Ascending aorta (tissue), 2 donors: ENCODE measurements at regions of chr1 and their contacts with region 1.

Region 1: GRCh38 chr1:21255278-21255942 is 34.9 kb downstream of the ECE1 start:
- DNase-seq: peak; percentile 66 to 96
- H3K4me3 ChIP-seq: no peak overlapping the region
- H3K27ac ChIP-seq: peak overlapping the region; percentile 76 to 80
- H3K4me1 ChIP-seq: peaks cover 19 to 48% of the 10 kb centered on the region in 2 donors
- H3K27me3 ChIP-seq: no peaks in the 10 kb centered on the region
- CTCF ChIP-seq: peak; percentile 81 to 91 (median 81)

Region 2: DNA sequence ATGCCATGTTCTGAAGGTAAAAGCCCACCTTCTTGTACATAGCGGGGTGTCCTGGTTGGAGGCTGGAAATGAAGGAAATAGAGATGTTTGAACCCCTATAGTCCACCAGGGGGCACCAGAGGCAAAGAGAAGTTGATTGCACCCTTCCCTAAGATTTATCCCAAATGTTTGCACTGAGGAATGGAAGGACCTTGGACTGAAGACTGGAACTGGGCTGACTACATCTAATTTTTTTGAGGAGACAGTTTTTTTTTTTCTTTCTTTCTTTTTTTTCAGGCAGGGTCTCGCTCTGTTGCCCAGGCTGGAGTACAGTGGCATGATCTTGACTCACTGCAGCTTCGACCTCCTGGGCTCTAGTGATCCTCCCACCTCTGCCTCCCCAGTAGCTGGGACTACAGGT is 23.4 kb before region 1 on chr1:
- intact Hi-C with region 1: loop called (anchors 2 kb)
- DNase-seq: no peak
- H3K4me3 ChIP-seq: no peak overlapping the region
- H3K27ac ChIP-seq: no peak overlapping the region
- H3K4me1 ChIP-seq: no peaks in the 10 kb centered on the region
- H3K27me3 ChIP-seq: no peaks in the 10 kb centered on the region
- CTCF ChIP-seq: peak; percentile 68 to 81 (median 71)

Region 3: DNA sequence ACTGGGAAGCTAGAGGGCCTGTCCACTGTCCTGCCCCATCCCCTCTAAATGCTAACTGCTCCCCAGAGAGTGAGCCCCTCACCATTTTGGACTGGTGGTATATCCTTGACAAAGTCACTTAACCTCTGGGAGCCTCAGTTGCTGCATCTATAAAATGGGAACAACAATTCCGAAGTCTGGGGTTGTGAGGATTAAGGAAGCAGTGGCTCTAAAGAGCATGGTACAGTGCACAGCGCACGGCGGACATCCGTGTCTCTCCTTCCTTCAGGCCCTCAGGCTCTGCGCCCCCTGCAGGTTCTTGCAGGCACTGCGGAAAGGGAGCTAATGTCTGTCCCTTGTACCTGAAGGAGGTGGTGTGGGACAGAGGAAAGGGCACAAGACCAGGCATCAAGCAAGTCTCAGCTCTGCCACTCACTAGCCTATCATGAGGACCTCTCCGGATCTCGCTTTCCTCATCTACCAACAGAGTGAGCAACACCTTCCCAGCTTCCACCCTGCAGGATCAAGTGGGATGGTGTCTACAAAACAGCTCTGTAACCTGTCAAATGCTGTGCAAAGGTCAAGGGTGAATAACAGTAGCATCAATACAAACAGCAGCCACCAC is 14.8 kb after region 1 on chr1:
- intact Hi-C with region 1: loop called (anchors 2 kb)
- DNase-seq: peak in 1 of 2 donors; percentile 93
- H3K4me3 ChIP-seq: no peak overlapping the region
- H3K27ac ChIP-seq: peak overlapping the region; percentile 72 to 98
- H3K4me1 ChIP-seq: peaks cover 21 to 42% of the 10 kb centered on the region in 2 donors
- H3K27me3 ChIP-seq: no peaks in the 10 kb centered on the region
- CTCF ChIP-seq: peak; percentile 82 to 93 (median 87)

Region 4: GRCh38 chr1:21289700-21290545 is 34.5 kb after region 1 on chr1 and contains the start of gene ECE1:
- intact Hi-C with region 1: loop called (anchors 2 kb)
- DNase-seq: peak in 1 of 2 donors; percentile 77
- H3K4me3 ChIP-seq: peak within 1 kb of the TSS; percentile 80 to 84
- H3K27ac ChIP-seq: peak within 1 kb of the TSS; percentile 79 to 82
- H3K4me1 ChIP-seq: peaks cover 9 to 35% of the 10 kb centered on the region in 2 donors
- H3K27me3 ChIP-seq: no peaks in the 10 kb centered on the region
- CTCF ChIP-seq: no peak
- total RNA-seq, gene ECE1: 336 TPM

Region 5: DNA sequence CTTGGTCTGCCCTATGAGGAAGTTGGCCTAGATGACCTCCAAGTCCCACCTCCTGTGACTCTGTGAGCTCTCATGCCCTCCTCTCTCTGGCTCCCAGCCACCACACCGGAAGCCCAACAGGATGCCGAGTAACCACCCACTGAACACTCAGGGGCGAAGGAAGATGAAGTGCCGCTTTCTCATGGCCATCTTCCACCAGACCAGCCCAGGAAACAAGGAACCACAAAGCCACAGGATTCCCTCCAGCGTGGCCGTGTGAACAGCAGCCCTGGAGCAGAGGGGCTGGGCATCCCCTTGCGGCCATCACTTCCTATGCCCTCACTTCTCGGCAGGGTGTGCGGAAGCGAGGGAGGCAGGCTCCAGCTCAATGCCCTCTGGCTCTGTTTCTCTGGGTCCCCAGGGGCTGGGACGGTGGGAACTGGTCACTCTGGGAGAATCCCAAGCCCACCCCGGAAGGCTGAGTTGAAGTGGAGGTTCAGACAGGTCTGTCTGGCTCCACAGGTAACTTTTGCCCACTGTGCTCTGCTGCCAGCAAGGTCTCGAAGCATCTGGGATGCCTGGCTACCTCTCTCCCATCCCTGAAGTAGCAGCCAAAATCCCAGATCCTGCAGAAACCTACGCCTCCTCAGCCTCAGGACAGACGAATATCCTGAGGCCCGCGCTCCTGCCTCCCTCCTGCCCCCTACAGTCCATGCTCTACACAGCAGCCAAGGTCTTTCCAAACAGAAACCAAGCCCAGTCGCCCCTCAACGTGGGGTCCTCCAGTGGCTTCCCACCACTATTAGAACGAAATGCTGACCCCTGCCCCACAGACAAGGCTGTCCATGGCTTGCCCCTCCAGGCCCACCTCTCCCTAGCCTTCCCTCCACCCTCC is 79.0 kb after region 1 on chr1:
- intact Hi-C with region 1: loop called (anchors 1 kb)
- DNase-seq: peak; percentile 70 to 94
- H3K4me3 ChIP-seq: peak overlapping the region; percentile 47 to 59
- H3K27ac ChIP-seq: peak overlapping the region; percentile 95 to 97
- H3K4me1 ChIP-seq: peaks cover 68 to 94% of the 10 kb centered on the region in 2 donors
- H3K27me3 ChIP-seq: no peaks in the 10 kb centered on the region
- CTCF ChIP-seq: peak; percentile 87 to 90 (median 88)

Region 6: GRCh38 chr1:21368515-21369289 is 113.3 kb after region 1 on chr1:
- intact Hi-C with region 1: loop called (anchors 1 kb)
- DNase-seq: peak; percentile 14 to 87
- H3K4me3 ChIP-seq: peak overlapping the region in 1 of 2 donors; percentile 25
- H3K27ac ChIP-seq: no peak overlapping the region
- H3K4me1 ChIP-seq: no peaks in the 10 kb centered on the region
- H3K27me3 ChIP-seq: no peaks in the 10 kb centered on the region
- CTCF ChIP-seq: peak; percentile 99